Heart left ventricle (tissue), 16 donors: ENCODE measurements at regions of chr9 and their contacts with region 1.

Region 1: GRCh38 chr9:116149844-116150243 is 3.7 kb upstream of the PAPPA start:
- DNase-seq: no peak
- ATAC-seq: peak in 1 of 4 donors; percentile 47
- H3K4me3 ChIP-seq: no peak overlapping the region
- H3K27ac ChIP-seq: no peak overlapping the region
- H3K4me1 ChIP-seq: peaks cover 0 to 11% (median 0%) of the 10 kb centered on the region in 12 donors
- H3K27me3 ChIP-seq: peaks cover 0 to 29% (median 4%) of the 10 kb centered on the region in 9 donors
- CTCF ChIP-seq: peak; percentile 25 to 67 (median 55)
- POLR2A ChIP-seq: no peak

Region 2: DNA sequence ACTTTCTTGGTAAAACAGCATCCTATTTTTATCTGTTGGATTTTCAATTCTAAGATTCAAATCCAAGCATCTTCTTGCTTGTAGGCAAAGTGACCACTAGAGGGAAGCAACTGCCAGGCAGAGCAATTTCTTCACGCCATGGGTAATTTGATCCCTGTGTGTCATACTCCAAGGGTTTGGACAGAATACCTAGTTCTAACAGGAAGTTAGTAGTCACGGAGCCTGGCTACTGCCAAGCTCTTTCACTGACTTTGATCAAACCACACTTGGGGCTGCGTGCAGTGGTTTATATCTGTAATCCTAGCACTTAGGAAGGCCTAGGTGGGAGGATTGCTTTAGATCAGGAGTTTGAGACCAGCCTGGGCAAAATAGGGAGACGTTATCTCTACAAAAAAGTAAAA is 558.3 kb before region 1 on chr9:
- intact Hi-C with region 1: loop called in 6 of 10 experiments (anchors 5 to 10 kb)
- DNase-seq: peak in 4 of 5 donors; percentile 33 to 64 (median 52)
- ATAC-seq: peak; percentile 53 to 92 (median 86)
- H3K4me3 ChIP-seq: no peak overlapping the region
- H3K27ac ChIP-seq: peak overlapping the region in 1 of 12 donors; percentile 38
- H3K4me1 ChIP-seq: peaks cover 0 to 6% (median 0%) of the 10 kb centered on the region in 12 donors
- H3K27me3 ChIP-seq: peaks cover 0 to 25% (median 3%) of the 10 kb centered on the region in 9 donors
- CTCF ChIP-seq: peak; percentile 43 to 81 (median 65)
- POLR2A ChIP-seq: no peak

Region 3: DNA sequence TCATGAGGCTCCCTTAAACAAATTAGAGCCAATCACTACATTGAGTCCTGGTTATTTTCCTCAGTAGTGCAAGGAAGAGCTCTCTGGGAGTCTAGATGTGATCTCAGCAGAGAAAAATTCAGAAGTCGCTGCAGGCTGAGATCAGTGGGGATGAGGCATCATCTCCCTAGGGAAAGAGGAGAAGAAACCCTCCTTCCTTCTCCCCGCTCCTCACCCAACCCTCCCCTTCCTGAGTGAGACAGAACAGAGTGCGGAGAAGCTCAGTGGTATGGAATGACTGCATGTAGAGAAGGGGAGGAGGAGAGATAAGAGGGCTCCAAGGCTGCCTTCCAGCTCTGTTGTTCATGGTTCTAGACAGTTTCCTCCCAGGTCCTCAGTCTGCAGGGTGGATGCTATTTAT is 84.3 kb after region 1 on chr9:
- intact Hi-C with region 1: no loop called
- DNase-seq: peak in 2 of 5 donors; percentile 10 to 38
- ATAC-seq: peak in 2 of 4 donors; percentile 53 to 88
- H3K4me3 ChIP-seq: no peak overlapping the region
- H3K27ac ChIP-seq: no peak overlapping the region
- H3K4me1 ChIP-seq: peaks cover 0 to 9% (median 0%) of the 10 kb centered on the region in 12 donors
- H3K27me3 ChIP-seq: no peaks in the 10 kb centered on the region
- CTCF ChIP-seq: no peak
- POLR2A ChIP-seq: no peak

Region 4: DNA sequence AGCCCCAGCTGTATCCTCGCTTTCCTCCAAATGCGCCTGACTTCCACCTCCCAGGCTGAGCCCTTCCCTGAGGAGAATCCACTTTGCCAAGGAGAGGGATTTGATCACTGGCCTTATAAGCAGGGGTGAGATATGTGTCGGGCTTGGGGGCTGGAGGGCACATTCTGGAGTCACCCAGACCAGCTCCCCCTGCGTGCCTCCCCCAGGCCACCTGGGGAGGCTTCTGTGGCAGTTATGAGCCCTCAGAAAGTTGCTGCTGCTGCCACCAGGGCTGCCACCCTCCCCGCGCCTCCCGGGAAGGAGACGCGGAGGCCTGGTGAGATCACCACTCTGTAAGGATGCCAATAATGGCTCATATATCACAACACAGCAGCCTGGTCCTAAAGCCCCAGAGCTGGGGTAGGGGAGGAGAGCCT is 215.2 kb after region 1 on chr9:
- intact Hi-C with region 1: loop called in 1 of 10 experiments (anchors 10 kb)
- DNase-seq: peak; percentile 65 to 74 (median 68)
- ATAC-seq: peak; percentile 87 to 97 (median 96)
- H3K4me3 ChIP-seq: peak overlapping the region in 5 of 12 donors; percentile 18 to 34 (median 25)
- H3K27ac ChIP-seq: peak overlapping the region in 8 of 12 donors; percentile 39 to 76 (median 61)
- H3K4me1 ChIP-seq: peaks cover 0 to 25% (median 7%) of the 10 kb centered on the region in 12 donors
- H3K27me3 ChIP-seq: no peaks in the 10 kb centered on the region
- CTCF ChIP-seq: peak in 1 of 12 donors; percentile 30
- POLR2A ChIP-seq: no peak

Region 5: GRCh38 chr9:116646661-116647512 is 497.0 kb after region 1 on chr9:
- intact Hi-C with region 1: loop called in 5 of 10 experiments (anchors 5 to 10 kb)
- DNase-seq: no peak
- ATAC-seq: peak; percentile 62 to 87 (median 82)
- H3K4me3 ChIP-seq: no peak overlapping the region
- H3K27ac ChIP-seq: peak overlapping the region in 1 of 12 donors; percentile 66
- H3K4me1 ChIP-seq: peaks cover 0 to 39% (median 7%) of the 10 kb centered on the region in 12 donors
- H3K27me3 ChIP-seq: no peaks in the 10 kb centered on the region
- CTCF ChIP-seq: peak; percentile 35 to 69 (median 58)
- POLR2A ChIP-seq: no peak

Region 6: DNA sequence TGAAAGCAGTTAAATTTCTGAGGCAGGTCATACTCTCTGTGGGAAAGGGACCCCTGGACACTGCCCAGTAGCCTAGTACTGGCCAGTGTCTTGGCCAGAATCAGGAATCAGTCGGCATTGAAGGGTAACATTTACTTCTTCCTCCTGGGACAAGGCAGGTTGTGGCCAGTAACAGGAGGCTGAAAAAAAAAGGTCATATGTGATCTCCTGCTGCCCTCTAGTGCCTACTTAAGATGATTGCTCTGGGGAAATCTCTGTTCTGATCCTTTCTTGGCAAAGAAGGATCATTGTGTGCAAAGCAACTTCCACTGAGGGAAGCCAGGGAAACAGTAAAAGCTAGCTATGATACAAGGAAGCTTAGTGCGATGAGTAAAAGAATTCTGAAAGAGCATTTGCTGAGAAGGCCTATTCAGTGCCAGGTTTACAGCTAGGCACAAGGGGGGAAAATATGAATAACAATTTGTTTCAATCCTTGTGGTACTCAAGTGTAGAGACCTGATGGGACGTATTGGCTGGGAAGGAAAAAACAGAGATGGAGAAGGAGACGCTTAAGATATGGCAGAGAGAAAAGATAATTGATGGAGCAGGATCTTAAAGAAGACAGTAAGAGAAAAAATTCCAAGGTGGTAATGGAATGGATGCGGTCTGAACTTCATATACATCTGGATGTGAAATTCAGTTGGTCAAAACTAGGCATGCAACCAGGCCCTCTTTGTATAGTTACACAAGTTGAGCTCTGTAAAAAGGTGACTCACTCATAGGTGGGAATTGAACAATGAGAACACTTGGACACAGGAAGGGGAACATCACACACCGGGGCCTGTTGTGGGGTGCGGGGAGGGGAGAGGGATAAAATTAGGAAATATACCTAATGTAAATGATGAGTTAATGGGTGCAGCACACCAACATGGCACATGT is 511.5 kb after region 1 on chr9:
- intact Hi-C with region 1: loop called in 6 of 10 experiments (anchors 5 to 10 kb)
- DNase-seq: peak in 1 of 5 donors; percentile 15
- ATAC-seq: peak; percentile 59 to 86 (median 82)
- H3K4me3 ChIP-seq: no peak overlapping the region
- H3K27ac ChIP-seq: no peak overlapping the region
- H3K4me1 ChIP-seq: peaks cover 0 to 18% (median 7%) of the 10 kb centered on the region in 12 donors
- H3K27me3 ChIP-seq: no peaks in the 10 kb centered on the region
- CTCF ChIP-seq: peak; percentile 44 to 80 (median 70)
- POLR2A ChIP-seq: no peak